ENCODE measurements at regions of chr3 and their contacts with region 1.

Region 1: DNA sequence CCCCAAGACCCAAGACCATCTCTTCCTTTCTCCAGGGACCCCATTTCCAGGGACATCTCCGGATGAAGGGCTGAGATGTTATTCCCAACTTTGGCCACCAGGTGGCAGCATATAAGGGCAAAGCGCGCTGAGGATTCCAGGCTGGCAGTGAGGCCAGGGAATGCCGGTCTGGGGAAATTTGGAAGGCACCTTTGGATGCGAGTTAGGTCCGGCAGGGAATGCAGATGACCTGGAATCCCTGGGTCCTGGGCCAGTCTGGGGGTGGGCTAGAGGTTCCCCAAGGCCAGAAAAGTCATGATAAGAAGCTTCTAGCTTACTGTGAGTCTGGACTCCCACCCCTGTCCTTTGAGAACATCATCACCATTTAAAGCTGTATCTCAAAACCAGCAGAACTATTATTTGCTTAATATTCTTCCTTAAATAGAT is 1.6 kb upstream of the CHST13 start:
- DNase-seq: peak; percentile 65
- H3K4me3 Mint-ChIP-seq: no peak overlapping the region
- H3K27ac Mint-ChIP-seq: no peak overlapping the region
- H3K4me1 Mint-ChIP-seq: no peaks in the 10 kb centered on the region
- H3K27me3 Mint-ChIP-seq: no peaks in the 10 kb centered on the region
- CTCF ChIP-seq: peak; percentile 90

Region 2: DNA sequence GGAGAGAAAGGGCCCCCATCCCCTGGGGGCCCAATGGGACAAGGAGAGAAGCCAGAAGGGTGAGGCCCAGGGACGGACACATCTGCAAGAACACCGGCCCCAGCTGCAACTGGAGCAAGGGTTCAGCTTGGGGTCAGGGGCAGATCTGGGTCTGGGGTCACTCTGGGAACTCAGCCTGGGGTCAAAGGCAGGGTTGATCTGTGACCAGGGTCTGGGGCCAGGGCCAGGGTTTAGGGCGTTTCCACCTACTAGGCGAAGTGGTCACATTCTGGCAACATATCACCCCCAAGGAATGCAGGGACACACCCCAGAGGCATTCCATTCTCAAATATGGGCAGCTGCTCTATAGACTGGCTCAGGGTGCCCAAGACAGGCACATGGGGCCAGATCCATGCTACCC is 13.8 kb before region 1 on chr3:
- CTCF ChIA-PET with region 1: interaction called, 34 read pairs
- POLR2A ChIA-PET with region 1: no interaction called
- intact Hi-C with region 1: no loop called
- DNase-seq: no peak
- H3K4me3 Mint-ChIP-seq: no peak overlapping the region
- H3K27ac Mint-ChIP-seq: no peak overlapping the region
- H3K4me1 Mint-ChIP-seq: no peaks in the 10 kb centered on the region
- H3K27me3 Mint-ChIP-seq: peaks cover 14% of the 10 kb centered on the region
- CTCF ChIP-seq: no peak

Region 3: DNA sequence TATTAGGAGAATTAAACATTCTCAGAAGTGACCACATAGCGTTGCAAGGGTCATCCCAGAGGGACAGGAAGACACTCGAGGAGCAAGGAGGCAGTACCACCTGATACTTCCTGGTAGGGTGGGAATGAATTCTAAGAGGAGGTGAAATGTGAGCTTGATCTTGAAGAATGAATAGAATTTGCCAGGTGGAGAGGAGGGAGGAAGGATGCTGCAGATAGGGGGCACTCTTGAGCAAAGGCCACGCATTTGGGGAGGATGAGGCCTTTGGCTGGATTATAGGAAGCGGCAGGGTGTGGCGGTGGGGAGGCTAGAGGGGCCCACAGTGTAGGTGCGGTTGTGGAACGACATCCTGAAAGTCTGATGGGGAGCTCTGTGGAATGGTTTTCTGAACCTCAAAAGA is 215.2 kb after region 1 on chr3:
- CTCF ChIA-PET with region 1: no interaction called
- POLR2A ChIA-PET with region 1: no interaction called
- intact Hi-C with region 1: no loop called
- DNase-seq: no peak
- H3K4me3 Mint-ChIP-seq: no peak overlapping the region
- H3K27ac Mint-ChIP-seq: no peak overlapping the region
- H3K4me1 Mint-ChIP-seq: no peaks in the 10 kb centered on the region
- H3K27me3 Mint-ChIP-seq: no peaks in the 10 kb centered on the region
- CTCF ChIP-seq: no peak

Measured in MCF 10A (cell line).